SK-N-SH (cell line): ENCODE measurements at regions of chr5 and their contacts with region 1.

Region 1: GRCh38 chr5:112551419-112552032 is 132.4 kb upstream of the EPB41L4A start:
- DNase-seq: peak; percentile 42
- H3K4me3 ChIP-seq: no peak overlapping the region; a peak in 1 of 4 replicates
- H3K27ac ChIP-seq: no peak overlapping the region
- H3K4me1 ChIP-seq: peaks cover 0 to 3% of the 10 kb centered on the region in 2 experiments; a peak in 1 of 4 replicates
- H3K27me3 ChIP-seq: no peaks in the 10 kb centered on the region
- CTCF ChIP-seq: peak; percentile 82
- EP300 ChIP-seq: no peak
- RAD21 ChIP-seq: peak; percentile 95

Region 2: DNA sequence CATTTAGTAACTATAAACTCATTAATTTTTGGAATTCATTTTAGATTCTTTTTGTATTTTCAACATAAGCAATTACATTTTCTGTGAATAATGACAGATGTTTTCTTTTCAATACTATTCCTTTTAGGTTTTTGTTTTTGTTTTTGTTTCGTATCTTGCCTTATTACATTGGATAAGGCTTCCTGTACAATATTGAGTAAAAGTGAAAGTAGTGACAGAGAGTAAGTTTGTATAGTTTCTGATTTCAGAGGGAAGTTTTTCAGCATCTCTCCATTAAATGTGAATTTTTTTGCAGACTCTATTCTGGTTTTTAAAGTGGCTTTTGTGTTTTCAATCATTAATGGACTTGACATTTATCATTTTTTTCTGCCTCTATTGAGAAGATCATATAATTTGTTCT is 1340.2 kb before region 1 on chr5:
- CTCF ChIA-PET with region 1: no interaction called
- POLR2A ChIA-PET with region 1: no interaction called
- DNase-seq: no peak
- H3K4me3 ChIP-seq: no peak overlapping the region
- H3K27ac ChIP-seq: no peak overlapping the region
- H3K4me1 ChIP-seq: no peaks in the 10 kb centered on the region
- H3K27me3 ChIP-seq: no peaks in the 10 kb centered on the region
- CTCF ChIP-seq: no peak
- EP300 ChIP-seq: no peak
- RAD21 ChIP-seq: no peak

Region 3: DNA sequence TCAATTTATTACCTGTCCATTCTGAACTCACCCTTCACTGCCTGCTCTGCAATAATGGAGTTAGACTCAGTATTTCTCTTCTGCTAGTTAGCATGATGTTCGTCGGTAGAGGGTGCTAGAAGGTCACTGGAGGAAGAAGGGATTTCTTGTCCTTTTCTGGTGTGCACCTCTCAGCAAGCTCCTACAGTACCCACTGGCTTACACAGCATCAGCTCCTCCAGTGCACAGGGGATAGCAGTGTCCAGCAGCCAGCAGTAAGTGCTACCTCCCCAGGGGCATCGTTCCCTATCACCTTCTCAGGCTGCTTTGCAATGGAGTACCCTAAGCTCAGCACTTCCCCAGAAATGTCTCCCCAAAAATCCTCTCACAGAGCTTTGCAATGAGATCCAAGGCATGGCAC is 140.2 kb after region 1 on chr5:
- CTCF ChIA-PET with region 1: interaction called, 48 read pairs
- POLR2A ChIA-PET with region 1: no interaction called
- DNase-seq: peak; percentile 16
- H3K4me3 ChIP-seq: no peak overlapping the region
- H3K27ac ChIP-seq: no peak overlapping the region
- H3K4me1 ChIP-seq: no peaks in the 10 kb centered on the region; a peak in 1 of 4 replicates
- H3K27me3 ChIP-seq: no peaks in the 10 kb centered on the region
- CTCF ChIP-seq: peak; percentile 55
- EP300 ChIP-seq: no peak
- RAD21 ChIP-seq: peak; percentile 80

Region 4: GRCh38 chr5:112743631-112744030 is 192.1 kb after region 1 on chr5:
- CTCF ChIA-PET with region 1: interaction called, 10 read pairs
- POLR2A ChIA-PET with region 1: no interaction called
- DNase-seq: no peak
- H3K4me3 ChIP-seq: no peak overlapping the region
- H3K27ac ChIP-seq: no peak overlapping the region
- H3K4me1 ChIP-seq: peaks cover 5% of the 10 kb centered on the region in 2 experiments; a peak in 3 of 4 replicates
- H3K27me3 ChIP-seq: no peaks in the 10 kb centered on the region
- CTCF ChIP-seq: no peak
- EP300 ChIP-seq: no peak
- RAD21 ChIP-seq: no peak